Caco-2 (cell line): ENCODE measurements at regions of chr13 and their contacts with region 1.

Region 1: DNA sequence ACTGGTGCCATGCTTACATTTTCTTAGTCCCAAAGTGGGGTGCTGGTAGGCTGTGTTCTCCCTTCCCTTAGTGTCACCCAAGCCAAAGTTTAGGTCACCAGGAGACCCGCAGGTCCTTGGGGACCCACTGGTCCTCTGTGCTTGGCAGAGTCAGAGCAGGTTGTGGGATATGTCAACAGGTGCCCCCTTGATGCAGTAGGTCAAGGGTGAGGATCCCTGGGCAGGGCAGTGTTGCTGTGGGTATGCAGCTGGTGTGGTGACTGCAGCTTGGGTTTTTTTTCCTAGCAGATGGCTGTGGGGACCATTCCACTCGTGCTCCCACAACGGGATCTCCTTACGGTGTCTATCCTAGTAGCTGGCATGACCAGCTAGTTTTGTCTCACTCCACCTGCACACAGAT is 23.7 kb downstream of the NHLRC3 start:
- DNase-seq: no peak
- H3K4me3 ChIP-seq: no peak overlapping the region
- H3K4me3 Mint-ChIP-seq: no peak overlapping the region
- H3K27ac Mint-ChIP-seq: no peak overlapping the region
- H3K4me1 ChIP-seq: no peaks in the 10 kb centered on the region
- H3K4me1 Mint-ChIP-seq: no peaks in the 10 kb centered on the region
- H3K27me3 ChIP-seq: no peaks in the 10 kb centered on the region
- H3K27me3 Mint-ChIP-seq: no peaks in the 10 kb centered on the region
- CTCF ChIP-seq: no peak

Region 2: GRCh38 chr13:39073992-39074391 is 12.0 kb after region 1 on chr13:
- CTCF ChIA-PET with region 1: no interaction called
- POLR2A ChIA-PET with region 1: no interaction called
- intact Hi-C with region 1: loop called (anchors 1 kb)
- DNase-seq: no peak
- H3K4me3 ChIP-seq: no peak overlapping the region
- H3K4me3 Mint-ChIP-seq: no peak overlapping the region
- H3K27ac Mint-ChIP-seq: no peak overlapping the region
- H3K4me1 ChIP-seq: no peaks in the 10 kb centered on the region
- H3K4me1 Mint-ChIP-seq: no peaks in the 10 kb centered on the region
- H3K27me3 ChIP-seq: no peaks in the 10 kb centered on the region
- H3K27me3 Mint-ChIP-seq: peaks cover 6% of the 10 kb centered on the region
- CTCF ChIP-seq: no peak

Region 3: GRCh38 chr13:39091586-39091985 is 29.6 kb after region 1 on chr13:
- CTCF ChIA-PET with region 1: no interaction called
- POLR2A ChIA-PET with region 1: no interaction called
- intact Hi-C with region 1: no loop called
- DNase-seq: no peak
- H3K4me3 ChIP-seq: no peak overlapping the region
- H3K4me3 Mint-ChIP-seq: no peak overlapping the region
- H3K27ac Mint-ChIP-seq: no peak overlapping the region
- H3K4me1 ChIP-seq: peaks cover 8% of the 10 kb centered on the region
- H3K4me1 Mint-ChIP-seq: peaks cover 6% of the 10 kb centered on the region
- H3K27me3 ChIP-seq: no peaks in the 10 kb centered on the region
- H3K27me3 Mint-ChIP-seq: no peaks in the 10 kb centered on the region
- CTCF ChIP-seq: no peak